ENCODE measurements at regions of chr5 and their contacts with region 1.

Region 1: DNA sequence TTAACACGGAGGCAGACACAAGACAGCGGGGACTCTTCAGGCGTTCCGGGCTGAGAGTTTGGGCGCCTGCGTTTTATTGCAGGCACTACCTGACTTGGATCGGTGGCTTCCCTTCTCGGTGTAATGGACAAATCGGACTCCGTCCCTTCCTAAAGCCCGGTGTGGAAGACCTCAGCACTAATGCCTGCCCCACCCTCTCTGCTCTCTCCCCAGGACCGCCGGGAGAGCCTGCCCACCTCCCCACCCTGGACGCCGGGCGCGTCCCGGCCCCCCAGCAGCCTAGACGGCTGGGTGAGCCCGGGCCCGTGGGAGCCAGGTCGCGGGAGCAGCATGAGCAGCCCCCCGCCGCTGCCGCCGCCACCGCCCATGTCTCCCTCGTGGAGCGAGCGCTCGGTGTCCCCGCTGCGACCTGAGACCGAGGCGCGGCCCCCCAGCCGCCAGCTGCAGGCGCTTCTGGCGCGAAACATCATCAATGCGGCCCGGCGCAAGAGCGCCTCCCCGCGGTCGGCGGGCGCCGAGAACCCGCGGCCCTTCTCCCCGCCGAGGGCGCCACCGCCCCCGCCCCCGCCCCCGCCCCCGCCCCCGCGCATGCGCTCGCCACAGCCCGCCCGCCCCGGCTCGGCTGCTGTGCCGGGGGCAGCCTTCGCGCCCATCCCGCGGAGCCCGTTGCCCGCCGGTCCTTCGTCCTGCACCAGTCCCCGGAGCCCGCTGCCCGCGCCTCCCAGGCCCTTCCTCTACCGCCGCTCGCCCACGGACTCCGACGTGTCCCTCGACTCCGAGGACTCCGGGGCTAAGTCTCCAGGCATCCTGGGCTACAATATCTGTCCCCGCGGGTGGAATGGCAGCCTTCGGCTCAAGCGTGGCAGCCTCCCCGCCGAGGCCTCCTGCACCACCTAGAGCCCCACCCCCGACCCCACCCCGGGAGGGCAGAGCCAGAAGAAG is 4.6 kb upstream of the MYOZ3 start:
- DNase-seq: peak; percentile 76
- H3K4me3 ChIP-seq: peak overlapping the region; percentile 55 to 63
- H3K27ac ChIP-seq: peak overlapping the region; percentile 79
- H3K4me1 ChIP-seq: peaks cover 72% of the 10 kb centered on the region
- H3K27me3 ChIP-seq: no peaks in the 10 kb centered on the region
- CTCF ChIP-seq: peak; percentile 30 to 67 (median 64)
- POLR2A ChIP-seq: no peak

Region 2: GRCh38 chr5:150589871-150590601 is 66.4 kb before region 1 on chr5:
- intact Hi-C with region 1: loop called (anchors 10 kb)
- DNase-seq: peak; percentile 78
- H3K4me3 ChIP-seq: no peak overlapping the region
- H3K27ac ChIP-seq: peak overlapping the region in 1 of 2 donors; percentile 64
- H3K4me1 ChIP-seq: peaks cover 27% of the 10 kb centered on the region
- H3K27me3 ChIP-seq: no peaks in the 10 kb centered on the region
- CTCF ChIP-seq: peak; percentile 72 to 76 (median 75)
- POLR2A ChIP-seq: no peak